Left cardiac atrium (tissue), 4 donors: ENCODE measurements at regions of chr16 and their contacts with region 1.

Region 1: DNA sequence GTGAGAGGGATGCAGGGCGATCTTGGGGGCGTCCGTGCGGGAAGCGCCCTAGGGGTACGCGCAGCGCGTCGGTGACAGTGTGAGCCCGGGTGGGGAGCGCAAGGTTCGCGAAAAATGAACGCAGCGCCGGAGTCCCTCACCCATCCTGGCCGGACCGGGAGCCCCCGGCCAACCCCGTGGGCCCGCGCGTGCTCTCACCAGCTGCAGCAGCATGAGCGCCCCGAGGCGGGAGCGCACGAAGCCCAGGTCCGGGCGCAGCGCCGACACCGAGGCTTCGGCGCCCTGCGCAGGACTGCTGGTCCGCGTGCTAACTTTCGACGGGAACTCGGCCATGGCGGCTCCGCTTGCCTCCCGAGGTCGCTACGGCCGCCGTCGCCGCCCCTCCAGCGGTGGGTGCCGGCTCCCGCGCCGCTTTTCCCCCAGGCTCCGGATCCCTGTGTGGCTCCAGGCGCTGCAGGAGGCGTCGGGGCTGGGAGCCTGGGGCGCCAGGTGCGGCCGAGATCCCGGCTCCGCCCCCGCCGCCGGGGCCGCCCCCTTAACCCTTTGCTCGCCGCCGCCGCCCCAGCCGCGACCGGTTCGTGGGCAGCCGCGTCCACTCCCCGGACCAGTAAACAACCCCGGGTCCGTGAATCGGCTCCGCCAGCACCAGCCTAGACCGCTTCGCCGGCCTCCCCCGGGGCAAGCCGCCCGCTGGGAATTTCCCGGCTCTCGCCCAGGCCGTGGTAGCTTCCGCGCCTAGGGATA is at the start of gene PLLP:
- DNase-seq: peak; percentile 40
- ATAC-seq: peak; percentile 76 to 89
- total RNA-seq, gene PLLP: 5.0 to 8.2 TPM

Region 2: DNA sequence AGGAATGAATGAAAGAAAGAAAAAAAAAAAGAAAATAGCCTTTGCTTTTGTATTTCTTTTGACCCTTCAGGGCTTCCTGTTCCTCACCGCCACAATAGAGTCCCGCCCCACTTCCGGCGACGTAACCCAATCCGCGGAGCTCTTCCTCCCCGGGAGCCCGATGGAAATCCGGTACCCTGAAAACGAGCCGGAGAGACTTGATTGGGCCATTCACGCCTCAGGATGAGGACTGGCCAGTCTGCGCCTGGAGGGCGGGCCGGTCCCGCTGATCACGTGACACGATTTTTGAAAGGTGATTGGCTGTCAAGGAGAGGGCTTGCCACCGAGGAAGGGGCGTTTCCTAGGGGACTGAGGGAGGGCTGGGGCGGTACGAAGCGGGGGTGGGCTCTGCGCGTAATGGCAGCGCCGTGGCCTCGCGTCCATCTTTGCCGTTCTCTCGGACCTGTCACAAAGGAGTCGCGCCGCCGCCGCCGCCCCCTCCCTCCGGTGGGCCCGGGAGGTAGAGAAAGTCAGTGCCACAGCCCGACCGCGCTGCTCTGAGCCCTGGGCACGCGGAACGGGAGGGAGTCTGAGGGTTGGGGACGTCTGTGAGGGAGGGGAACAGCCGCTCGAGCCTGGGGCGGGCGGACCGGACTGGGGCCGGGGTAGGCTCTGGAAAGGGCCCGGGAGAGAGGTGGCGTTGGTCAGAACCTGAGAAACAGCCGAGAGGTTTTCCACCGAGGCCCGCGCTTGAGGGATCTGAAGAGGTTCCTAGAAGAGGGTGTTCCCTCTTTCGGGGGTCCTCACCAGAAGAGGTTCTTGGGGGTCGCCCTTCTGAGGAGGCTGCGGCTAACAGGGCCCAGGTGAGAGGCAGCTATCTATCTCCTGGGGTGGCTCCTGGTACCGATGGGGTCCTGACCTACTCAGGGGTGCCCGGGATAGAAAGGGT is 98.2 kb before region 1 on chr16 and contains the starts of genes PSME3IP1 and RSPRY1:
- intact Hi-C with region 1: loop called in 1 of 2 experiments (anchors 10 kb)
- DNase-seq: peak; percentile 98
- ATAC-seq: peak; percentile 96 to 97
- total RNA-seq, gene PSME3IP1: 52.2 to 60.3 TPM
- total RNA-seq, gene RSPRY1: 13.4 to 16.5 TPM

Region 3: DNA sequence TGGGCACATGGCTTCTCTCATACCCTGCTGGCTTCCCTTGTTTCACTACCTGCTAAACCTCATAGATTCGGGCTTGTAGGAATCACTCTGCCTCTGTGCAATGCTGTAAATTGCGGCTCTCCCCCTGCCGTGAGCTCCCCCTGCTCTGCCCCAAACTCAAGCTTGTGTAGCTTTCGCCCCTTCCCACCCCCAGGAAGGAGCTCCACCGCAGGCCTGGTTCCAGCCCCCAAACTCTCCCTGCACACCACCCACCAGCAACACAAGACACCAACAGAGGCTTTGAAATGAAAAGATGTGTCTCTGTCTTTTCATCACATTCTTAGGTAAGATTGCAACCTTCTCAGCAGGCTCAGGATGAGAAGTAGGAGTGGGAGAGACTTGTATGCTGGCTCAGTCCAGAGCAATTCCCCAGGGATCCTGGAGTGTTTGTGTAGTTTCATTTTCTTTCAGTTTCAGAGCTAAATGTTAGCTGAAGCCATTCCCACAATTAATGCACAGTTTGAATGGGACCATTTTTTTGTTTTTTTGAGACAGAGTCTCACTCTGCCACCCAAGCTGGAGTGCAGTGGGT is 102.1 kb after region 1 on chr16:
- intact Hi-C with region 1: no loop called
- DNase-seq: no peak
- ATAC-seq: no peak

Region 4: DNA sequence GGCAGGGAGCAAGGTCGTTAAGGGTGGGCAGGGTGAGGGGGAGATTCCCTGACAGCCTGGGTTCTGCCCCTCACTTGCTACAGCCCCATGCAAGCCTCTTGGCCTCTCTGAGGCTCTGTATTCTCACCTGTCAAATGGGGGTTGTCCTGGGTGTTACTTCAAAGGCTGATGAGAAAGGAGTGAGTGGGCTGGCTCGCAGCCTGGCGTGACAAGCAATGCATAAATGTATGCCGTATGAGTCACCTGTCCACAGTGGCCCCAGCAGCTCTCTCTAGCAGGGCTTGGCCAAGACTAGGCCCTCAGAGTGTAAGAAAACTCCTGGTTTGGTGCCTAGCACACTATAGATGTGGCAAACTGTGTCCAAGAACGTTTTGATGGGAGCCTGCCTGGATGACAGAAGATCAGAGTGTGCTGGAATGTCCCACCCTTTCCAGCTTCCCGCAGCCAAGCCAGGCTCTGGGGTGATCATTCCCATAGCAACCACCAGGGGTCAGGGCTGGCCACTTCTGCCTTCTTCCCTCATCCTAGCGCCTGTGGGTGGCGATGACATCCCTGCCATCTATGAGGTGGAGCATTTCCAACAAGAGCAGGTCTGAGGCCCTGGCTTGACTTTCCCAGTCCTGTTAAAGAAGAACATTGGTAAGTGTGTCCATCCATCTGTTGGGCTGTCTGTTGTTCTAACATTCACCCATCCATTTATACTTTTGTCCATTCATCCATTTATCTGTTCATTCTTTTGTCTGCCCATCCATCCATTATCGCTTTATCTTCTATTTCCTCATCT is 306.9 kb after region 1 on chr16:
- intact Hi-C with region 1: no loop called
- DNase-seq: peak; percentile 75
- ATAC-seq: peak; percentile 90 to 91

Region 5: GRCh38 chr16:57882792-57883191 is 598.4 kb after region 1 on chr16:
- intact Hi-C with region 1: no loop called
- DNase-seq: no peak
- ATAC-seq: peak in 1 of 2 donors; percentile 40